ENCODE measurements at regions of chr11 and their contacts with region 1.

Region 1: DNA sequence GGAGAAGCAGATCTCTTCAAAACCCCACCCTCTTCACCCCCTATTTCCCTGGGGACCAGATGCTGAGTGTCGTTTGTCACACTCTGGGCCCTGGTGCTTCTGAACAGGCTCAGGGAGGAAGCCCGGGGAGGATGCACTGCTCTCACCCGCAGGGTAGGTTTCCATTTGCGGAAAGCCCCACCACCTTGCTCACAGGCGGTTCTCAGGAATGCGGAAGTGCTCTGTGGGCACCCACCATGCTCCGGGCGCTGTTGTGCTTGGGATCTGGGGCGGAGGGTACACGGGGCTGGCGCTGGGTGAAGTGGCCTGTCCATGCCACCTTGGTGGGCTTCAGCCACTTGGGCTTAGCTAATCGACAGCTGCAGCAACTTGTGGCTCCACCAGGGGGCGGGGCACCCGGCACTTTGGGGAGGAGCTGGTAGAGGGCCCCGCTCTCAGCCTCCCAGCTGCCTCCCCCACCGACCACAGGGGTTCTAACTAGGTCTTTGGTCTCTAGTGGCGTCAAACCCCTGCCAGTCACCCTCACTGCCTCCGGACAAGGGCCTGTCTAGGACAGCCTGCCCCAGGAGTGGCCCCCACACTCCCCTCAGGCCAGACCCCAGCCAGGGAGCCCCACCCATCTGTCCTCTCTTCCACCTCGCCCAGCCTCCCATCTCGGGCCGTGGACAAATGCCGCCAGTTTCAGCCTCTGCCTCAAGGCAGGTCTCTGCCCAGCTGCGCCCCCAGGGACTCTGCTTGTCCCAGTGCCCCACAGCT is 7.4 kb downstream of the NDUFV1 start:
- DNase-seq: peak; percentile 93
- H3K4me3 Mint-ChIP-seq: peak overlapping the region; percentile 80
- H3K27ac Mint-ChIP-seq: peak overlapping the region; percentile 98
- H3K4me1 Mint-ChIP-seq: peaks cover 24% of the 10 kb centered on the region
- H3K27me3 Mint-ChIP-seq: no peaks in the 10 kb centered on the region

Region 2: GRCh38 chr11:67572747-67573419 is 41.3 kb before region 1 on chr11:
- CTCF ChIA-PET with region 1: interaction called, 6 read pairs
- intact Hi-C with region 1: loop called (anchors 1 kb)
- DNase-seq: peak; percentile 59
- H3K4me3 Mint-ChIP-seq: no peak overlapping the region
- H3K27ac Mint-ChIP-seq: no peak overlapping the region
- H3K4me1 Mint-ChIP-seq: no peaks in the 10 kb centered on the region
- H3K27me3 Mint-ChIP-seq: peaks cover 8% of the 10 kb centered on the region

Region 3: GRCh38 chr11:67583247-67584204 is 30.6 kb before region 1 on chr11 and contains the start of gene GSTP1:
- CTCF ChIA-PET with region 1: interaction called, 8 read pairs
- intact Hi-C with region 1: loop called (anchors 2 kb)
- DNase-seq: peak; percentile 81
- H3K4me3 Mint-ChIP-seq: peak within 1 kb of the TSS; percentile 94
- H3K27ac Mint-ChIP-seq: peak within 1 kb of the TSS; percentile 85
- H3K4me1 Mint-ChIP-seq: peaks cover 47% of the 10 kb centered on the region
- H3K27me3 Mint-ChIP-seq: peaks cover 3% of the 10 kb centered on the region
- total RNA-seq, gene GSTP1: 398 to 403 TPM

Region 4: DNA sequence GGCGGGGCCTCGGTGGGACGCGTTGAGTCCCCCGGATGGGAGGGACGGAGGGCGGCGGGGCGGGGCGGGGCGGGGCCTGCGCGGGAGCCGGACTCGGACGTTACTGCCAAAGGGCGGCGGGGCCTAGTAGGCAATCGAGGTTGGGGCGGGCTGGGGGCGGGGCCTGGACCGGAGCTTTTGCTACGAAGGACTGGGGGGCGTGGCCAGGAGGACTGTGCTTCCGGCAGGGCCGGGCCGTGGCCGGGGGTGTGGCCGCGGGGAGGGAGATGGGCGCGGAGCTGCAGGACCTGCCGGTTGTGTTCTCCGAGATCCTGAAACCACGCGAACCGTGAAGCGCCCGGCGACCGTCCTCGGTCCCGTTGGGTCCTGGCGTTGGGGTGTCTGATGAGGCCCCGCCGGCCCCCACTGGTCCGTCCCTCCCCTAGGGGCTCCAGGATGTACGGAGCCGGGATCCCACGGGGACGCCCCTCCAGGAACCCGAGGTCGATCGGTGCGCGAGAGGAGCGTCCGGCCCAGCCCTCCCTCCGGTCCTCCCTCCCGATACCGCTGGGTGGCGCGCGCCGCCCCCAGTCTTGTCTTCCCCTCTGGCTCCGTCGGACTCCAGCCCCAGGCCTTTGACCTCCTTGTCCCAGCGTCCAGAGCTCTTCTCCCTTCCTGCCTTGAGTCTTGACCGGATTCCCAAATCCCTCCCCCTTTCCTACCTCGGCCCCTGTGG is 16.2 kb after region 1 on chr11:
- CTCF ChIA-PET with region 1: interaction called, 46 read pairs
- intact Hi-C with region 1: loop called (anchors 1 kb)
- DNase-seq: peak; percentile 96
- H3K4me3 Mint-ChIP-seq: peak overlapping the region; percentile 85
- H3K27ac Mint-ChIP-seq: peak overlapping the region; percentile 65
- H3K4me1 Mint-ChIP-seq: peaks cover 5% of the 10 kb centered on the region
- H3K27me3 Mint-ChIP-seq: no peaks in the 10 kb centered on the region

Region 5: GRCh38 chr11:68030318-68031138 is 416.4 kb after region 1 on chr11 and contains the start of gene NDUFS8:
- CTCF ChIA-PET with region 1: no interaction called
- intact Hi-C with region 1: loop called (anchors 10 kb)
- DNase-seq: peak; percentile 98
- H3K4me3 Mint-ChIP-seq: peak within 1 kb of the TSS; percentile 91
- H3K27ac Mint-ChIP-seq: peak within 1 kb of the TSS; percentile 88
- H3K4me1 Mint-ChIP-seq: peaks cover 23% of the 10 kb centered on the region
- H3K27me3 Mint-ChIP-seq: no peaks in the 10 kb centered on the region
- total RNA-seq, gene NDUFS8: 142 to 162 TPM

Region 6: DNA sequence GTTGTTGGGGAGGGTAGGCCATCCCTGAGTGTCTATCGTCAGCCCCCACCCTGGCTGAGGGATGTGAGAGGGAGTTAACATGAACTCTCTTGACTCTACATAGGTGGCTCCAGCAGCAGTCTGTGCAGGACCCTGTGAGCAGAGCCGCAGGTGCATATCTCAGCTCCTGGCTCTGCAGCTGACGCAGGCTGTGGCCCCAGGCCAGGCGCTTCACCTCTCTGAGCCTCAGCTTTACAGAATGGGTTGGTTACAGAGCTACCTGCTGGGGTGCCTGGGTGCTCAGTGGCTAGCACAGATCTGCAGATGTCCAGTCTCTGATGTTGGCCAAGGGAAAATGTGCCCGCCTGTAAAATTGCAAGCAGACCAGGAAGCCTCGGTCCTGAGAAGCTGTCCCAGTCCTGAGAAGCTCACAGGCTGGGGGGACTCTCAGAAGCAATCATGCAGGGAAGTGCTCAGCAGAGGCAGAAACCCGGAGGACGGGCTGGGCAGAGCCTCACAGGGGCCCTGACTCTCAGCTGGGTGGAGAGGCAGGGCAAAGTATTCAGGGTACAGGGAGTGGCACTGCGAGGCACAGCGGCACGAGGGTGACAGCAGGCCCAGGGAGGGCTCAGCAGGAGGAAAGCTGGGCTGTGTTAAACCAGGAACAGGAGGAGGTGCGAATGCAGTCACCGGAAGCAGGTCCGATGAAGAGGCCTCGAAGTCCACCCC is 682.4 kb after region 1 on chr11:
- CTCF ChIA-PET with region 1: no interaction called
- intact Hi-C with region 1: no loop called
- DNase-seq: no peak
- H3K4me3 Mint-ChIP-seq: no peak overlapping the region
- H3K27ac Mint-ChIP-seq: no peak overlapping the region
- H3K4me1 Mint-ChIP-seq: no peaks in the 10 kb centered on the region
- H3K27me3 Mint-ChIP-seq: no peaks in the 10 kb centered on the region